ENCODE measurements at regions of chr16 and their contacts with region 1.

Region 1: GRCh38 chr16:86929057-86929871 is 350.9 kb downstream of the FOXL1 start:
- DNase-seq: peak; percentile 59
- H3K4me3 ChIP-seq: no peak overlapping the region
- H3K27ac ChIP-seq: peak overlapping the region; percentile 71
- H3K27me3 ChIP-seq: no peaks in the 10 kb centered on the region
- CTCF ChIP-seq: no peak

Region 2: DNA sequence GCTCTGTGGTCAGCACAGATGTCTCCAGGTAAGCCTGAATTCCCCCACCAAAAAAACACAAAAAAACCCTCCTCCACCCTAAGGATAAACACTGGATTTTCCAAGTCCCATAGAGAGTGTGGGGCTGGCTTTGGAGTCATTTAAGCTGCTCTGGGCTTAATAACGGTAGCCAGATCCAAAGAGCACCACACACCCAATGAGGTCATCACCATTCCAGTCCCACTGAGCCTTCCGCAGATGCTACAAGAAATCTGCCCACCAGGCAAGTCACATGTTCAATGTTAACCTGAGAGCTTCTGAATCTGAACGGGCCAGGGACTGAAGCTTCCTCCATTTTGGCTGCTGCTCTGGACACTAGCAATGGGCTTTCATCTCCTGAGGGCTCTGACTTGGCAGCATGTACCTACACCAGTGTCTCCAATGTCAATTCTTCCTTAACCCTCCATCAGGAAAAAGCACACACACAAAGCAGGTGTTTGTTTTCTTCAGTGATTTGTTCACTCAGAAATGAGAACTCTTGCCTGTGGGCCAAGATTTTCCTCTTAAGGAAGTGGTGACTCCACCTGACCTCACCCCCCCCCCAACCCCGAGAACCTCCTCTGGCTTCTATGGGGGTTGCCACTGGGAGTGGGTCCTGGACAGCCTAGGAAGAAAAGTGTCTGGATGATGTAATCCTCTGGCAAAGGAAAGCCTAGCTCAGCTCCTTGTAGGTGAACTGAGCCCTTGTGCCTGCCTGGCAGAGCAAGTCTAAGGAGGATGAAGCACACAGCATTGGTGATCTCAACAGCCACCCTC is 130.8 kb before region 1 on chr16:
- CTCF ChIA-PET with region 1: no interaction called
- POLR2A ChIA-PET with region 1: no interaction called
- DNase-seq: no peak
- H3K4me3 ChIP-seq: no peak overlapping the region
- H3K27ac ChIP-seq: no peak overlapping the region
- H3K27me3 ChIP-seq: peaks cover 3% of the 10 kb centered on the region
- CTCF ChIP-seq: no peak

Region 3: DNA sequence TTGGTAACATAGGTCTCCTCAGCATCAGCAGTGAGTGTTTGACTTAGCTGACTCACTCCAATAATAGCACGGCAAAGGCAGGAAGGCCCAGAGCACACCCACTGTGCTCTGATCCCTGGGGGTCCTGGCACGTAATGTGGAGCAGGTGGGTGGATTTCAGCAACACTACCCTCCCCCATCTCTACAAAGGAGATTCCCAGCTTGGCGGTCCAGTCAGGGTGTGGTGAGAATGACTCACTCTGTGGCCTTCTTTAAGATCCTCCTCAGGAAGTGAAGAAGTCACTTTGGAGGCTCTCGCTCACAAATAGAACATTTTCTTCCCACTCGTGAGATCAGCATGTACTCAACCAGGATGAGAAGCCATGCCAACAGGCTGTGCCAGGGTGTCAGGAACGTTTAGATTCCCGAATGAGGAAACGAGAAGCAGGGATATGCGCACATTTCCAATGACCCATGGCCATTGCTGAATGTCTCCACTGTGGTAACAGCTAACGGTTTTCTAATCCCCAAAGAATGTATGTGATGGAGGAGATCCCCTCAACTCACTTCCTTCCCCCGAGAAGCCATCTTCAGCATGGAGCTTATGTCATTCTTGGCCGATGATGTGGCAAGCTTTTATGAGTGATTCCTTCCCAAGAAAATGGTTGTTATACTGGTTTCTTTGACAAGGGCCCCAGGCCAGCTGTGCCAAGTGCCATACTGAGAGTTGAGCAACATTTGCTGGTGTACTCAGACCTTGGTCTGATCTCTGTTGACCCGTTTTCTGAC is 22.8 kb after region 1 on chr16:
- CTCF ChIA-PET with region 1: no interaction called
- POLR2A ChIA-PET with region 1: interaction called, 11 read pairs
- DNase-seq: peak; percentile 87
- H3K4me3 ChIP-seq: no peak overlapping the region
- H3K27ac ChIP-seq: peak overlapping the region; percentile 97
- H3K27me3 ChIP-seq: no peaks in the 10 kb centered on the region
- CTCF ChIP-seq: no peak